ENCODE measurements at regions of chr13 and their contacts with region 1.

Region 1: DNA sequence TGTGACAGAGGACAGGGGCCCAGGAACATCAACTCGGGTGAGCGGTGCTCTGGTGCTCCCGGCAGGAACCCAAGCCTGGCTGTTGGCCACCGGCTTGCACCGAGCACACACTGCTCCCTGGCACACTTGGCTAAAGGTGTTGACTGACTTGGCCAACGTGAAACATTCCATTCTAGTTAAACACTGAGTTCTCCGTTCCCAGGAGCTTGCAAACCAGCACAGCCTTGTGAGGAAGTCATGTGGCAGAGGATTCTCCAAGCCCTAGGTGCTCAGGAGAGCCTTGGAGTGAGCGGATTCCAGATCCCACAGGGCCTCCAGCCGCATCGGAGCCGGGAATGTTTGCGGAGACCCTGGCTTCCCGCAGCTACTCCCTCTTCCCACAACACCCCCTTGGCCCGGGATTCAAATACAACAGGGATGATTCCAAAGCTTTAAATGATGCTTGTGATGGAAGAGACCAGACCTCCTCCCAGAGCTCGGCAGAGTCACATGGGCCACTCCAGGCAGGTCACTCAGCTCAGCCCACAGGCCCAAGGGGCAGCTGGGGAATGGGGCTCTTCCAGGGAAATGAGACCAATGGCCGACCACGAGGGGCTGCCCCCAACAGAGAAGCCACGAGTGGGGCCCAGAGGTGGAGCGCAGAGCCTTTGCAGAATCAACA is 2.9 kb downstream of the C13orf46 start:
- DNase-seq: peak; percentile 96
- H3K4me3 Mint-ChIP-seq: peak overlapping the region; percentile 67
- H3K27ac Mint-ChIP-seq: peak overlapping the region; percentile 86
- H3K4me1 Mint-ChIP-seq: peaks cover 5% of the 10 kb centered on the region
- H3K27me3 Mint-ChIP-seq: no peaks in the 10 kb centered on the region
- CTCF ChIP-seq: no peak

Region 2: DNA sequence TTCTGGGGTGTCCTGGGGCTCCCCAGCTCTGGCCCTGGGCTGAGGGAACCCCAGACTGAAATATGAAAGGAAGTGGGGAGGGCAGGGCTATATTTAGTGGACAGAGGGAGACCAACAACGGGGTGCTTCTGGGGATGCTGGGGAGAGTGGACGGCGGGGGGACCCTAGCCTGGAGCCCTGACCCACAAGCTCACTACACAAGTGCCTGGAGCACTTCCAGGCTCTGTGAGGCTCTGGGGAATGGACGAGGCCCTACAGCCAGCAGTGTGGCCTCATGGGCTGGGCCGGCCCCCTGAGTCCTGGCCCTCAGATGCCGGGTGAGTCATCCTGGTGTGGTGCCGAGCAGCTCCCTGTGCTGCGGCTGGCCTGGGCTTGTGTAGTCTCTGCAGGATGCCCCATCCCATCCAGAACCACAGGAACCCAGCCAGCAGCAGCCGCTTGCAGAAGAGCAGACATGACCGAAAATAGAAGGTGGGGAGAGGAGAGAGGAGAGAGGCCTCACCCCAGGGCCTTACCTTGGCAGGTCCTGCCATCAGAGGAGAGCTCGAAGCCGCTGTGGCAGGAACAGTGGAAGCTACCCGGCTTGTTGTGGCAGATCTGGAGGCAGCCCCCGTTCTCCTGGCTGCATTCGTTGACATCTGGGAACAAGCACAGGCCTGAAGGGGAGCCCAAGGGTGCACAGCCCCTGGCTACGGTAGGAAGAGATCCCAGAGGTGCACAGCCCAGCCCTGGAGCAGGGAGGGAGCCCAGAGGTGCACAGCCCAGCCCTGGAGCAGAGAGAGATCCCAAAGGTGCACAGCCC is 133.2 kb before region 1 on chr13:
- CTCF ChIA-PET with region 1: no interaction called
- POLR2A ChIA-PET with region 1: interaction called, 11 read pairs
- intact Hi-C with region 1: no loop called
- DNase-seq: peak; percentile 99
- H3K4me3 Mint-ChIP-seq: peak overlapping the region; percentile 75
- H3K27ac Mint-ChIP-seq: peak overlapping the region; percentile 100
- H3K4me1 Mint-ChIP-seq: peaks cover 21% of the 10 kb centered on the region
- H3K27me3 Mint-ChIP-seq: no peaks in the 10 kb centered on the region
- CTCF ChIP-seq: no peak

Region 3: GRCh38 chr13:113981201-113981605 is 10.3 kb after region 1 on chr13:
- CTCF ChIA-PET with region 1: interaction called, 6 read pairs
- POLR2A ChIA-PET with region 1: interaction called, 33 read pairs
- intact Hi-C with region 1: no loop called
- DNase-seq: peak; percentile 99
- H3K4me3 Mint-ChIP-seq: peak overlapping the region; percentile 55
- H3K27ac Mint-ChIP-seq: no peak overlapping the region
- H3K4me1 Mint-ChIP-seq: peaks cover 33% of the 10 kb centered on the region
- H3K27me3 Mint-ChIP-seq: no peaks in the 10 kb centered on the region
- CTCF ChIP-seq: no peak

Region 4: DNA sequence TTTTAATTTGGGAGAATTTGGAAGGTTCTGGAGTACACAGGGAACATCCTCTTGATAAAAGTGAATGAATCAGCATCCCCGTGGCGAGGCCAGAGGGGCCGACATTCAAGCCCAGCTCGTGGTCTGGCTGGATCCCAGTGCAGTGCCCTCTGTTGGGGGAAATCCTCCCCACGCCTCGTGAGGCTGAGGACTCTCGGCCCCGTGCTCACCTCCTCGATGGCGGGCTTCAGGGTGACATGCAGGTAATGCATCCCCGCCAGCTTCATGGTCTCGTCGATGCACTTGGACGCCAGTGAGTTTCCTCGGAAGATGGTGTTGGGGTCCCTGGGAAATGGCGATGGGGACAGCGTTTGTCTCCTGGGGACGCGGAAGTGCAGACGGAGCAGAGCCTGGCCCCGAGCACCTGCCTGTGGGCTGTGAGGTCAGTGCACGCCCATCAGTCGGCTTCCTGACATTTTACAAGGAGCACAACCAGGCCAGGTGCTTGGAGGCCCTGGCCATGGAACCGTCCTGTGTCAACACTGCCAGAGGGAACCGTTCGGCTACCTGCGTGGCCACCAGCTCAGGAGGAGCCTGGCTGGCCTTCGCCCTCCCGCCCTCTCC is 46.2 kb after region 1 on chr13:
- CTCF ChIA-PET with region 1: interaction called, 3 read pairs
- POLR2A ChIA-PET with region 1: interaction called, 33 read pairs
- intact Hi-C with region 1: no loop called
- DNase-seq: peak; percentile 20
- H3K4me3 Mint-ChIP-seq: no peak overlapping the region
- H3K27ac Mint-ChIP-seq: no peak overlapping the region
- H3K4me1 Mint-ChIP-seq: peaks cover 13% of the 10 kb centered on the region
- H3K27me3 Mint-ChIP-seq: no peaks in the 10 kb centered on the region
- CTCF ChIP-seq: no peak

Region 5: GRCh38 chr13:114234645-114235421 is 263.9 kb after region 1 on chr13 and contains the start of gene CDC16:
- CTCF ChIA-PET with region 1: interaction called, 3 read pairs
- POLR2A ChIA-PET with region 1: interaction called, 10 read pairs
- intact Hi-C with region 1: no loop called
- DNase-seq: peak; percentile 92
- H3K4me3 Mint-ChIP-seq: peak within 1 kb of the TSS; percentile 83
- H3K27ac Mint-ChIP-seq: peak within 1 kb of the TSS; percentile 79
- H3K4me1 Mint-ChIP-seq: peaks cover 6% of the 10 kb centered on the region
- H3K27me3 Mint-ChIP-seq: no peaks in the 10 kb centered on the region
- CTCF ChIP-seq: no peak
- total RNA-seq, gene CDC16: 68.6 and 72.4 TPM in 2 replicates

Measured in MCF 10A (cell line).